Naive thymus-derived CD4-positive, alpha-beta T cell (primary cell): ENCODE measurements at regions of chr6 and their contacts with region 1.

Region 1: DNA sequence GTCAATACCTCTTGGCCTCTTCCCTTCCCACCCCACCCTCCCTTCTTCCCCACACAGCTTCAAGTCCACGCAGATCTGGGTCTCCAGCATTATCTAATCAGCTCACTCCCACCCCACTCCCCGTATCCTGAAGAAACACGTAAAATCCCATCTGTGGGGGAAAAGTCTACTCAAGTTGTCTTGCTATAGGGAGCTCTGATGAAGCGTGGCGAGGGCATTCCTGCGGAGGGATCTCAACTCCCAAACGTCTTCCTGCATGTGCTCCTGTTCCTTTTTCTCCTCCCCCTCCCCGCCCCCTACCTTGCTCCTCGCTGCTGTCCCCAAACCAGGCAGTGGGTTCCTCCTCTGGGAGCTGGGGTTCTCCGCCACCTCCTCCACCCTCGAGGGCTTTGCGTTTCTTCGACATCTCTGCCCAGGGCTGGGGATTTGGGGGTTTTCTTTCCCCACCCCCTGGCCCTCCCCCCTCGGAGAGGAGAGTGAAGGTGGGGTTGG is 181.8 kb downstream of the TBXT start:
- DNase-seq: no peak
- ATAC-seq: no peak
- H3K4me3 ChIP-seq: no peak overlapping the region
- H3K4me3 Mint-ChIP-seq: no peak overlapping the region
- H3K27ac ChIP-seq: no peak overlapping the region
- H3K27ac Mint-ChIP-seq: no peak overlapping the region
- H3K4me1 ChIP-seq: no peaks in the 10 kb centered on the region
- H3K4me1 Mint-ChIP-seq: peaks cover 6 to 19% (median 16%) of the 10 kb centered on the region in 7 donors
- H3K27me3 ChIP-seq: no peaks in the 10 kb centered on the region
- H3K27me3 Mint-ChIP-seq: peaks cover 43 to 62% (median 53%) of the 10 kb centered on the region in 5 donors

Region 2: DNA sequence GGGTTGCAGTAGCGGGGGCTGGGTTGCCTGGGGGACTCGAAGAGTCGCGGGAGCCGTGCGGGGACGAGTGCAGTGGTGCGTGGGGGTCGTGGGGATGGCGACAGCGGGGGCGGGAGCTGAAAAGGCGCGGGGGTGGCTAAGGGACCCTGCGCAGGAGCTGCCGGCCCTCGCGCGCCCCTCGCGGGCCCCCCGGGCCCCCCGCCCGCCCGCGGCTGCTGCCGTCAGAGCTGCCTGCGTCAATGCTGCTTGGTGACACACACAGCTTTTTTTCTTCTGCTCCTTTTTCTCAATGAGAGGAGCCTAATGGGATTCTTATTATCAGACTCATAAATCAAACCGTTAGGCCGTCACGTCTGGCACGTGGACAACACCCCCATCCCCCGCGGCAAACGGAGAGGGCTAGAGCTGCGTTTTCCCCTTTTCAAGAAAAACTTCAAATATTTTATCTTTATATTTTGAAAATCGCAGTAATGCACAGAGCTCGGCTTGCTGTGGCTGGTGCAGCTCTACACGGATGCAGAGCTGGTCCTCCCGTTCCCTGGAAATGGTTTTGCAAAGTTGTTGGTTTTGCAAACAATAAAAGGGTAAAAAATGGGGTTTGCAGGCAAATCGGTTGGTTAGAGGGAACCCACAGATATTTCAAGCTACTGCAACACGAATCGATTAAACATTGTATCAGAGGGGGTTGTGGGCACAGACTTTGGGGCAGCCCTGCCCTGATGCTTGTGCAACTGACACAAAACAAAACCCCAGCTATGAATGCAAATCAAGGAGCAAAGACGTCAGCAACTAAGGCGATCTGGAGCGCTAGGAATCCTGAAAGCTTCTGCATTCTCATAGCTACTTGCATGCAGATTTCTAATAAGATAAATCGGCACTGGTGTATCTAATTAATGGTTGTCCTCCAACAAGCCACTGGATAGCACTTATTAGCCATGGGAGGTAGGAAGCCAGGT is 20.4 kb after region 1 on chr6:
- CTCF ChIA-PET with region 1: no interaction called
- POLR2A ChIA-PET with region 1: no interaction called
- intact Hi-C with region 1: loop called in 1 of 2 experiments (anchors 2 kb)
- DNase-seq: no peak
- ATAC-seq: no peak
- H3K4me3 ChIP-seq: no peak overlapping the region
- H3K4me3 Mint-ChIP-seq: peak overlapping the region in 3 of 10 donors; percentile 19 to 33 (median 30)
- H3K27ac ChIP-seq: no peak overlapping the region
- H3K27ac Mint-ChIP-seq: no peak overlapping the region
- H3K4me1 ChIP-seq: no peaks in the 10 kb centered on the region
- H3K4me1 Mint-ChIP-seq: peaks cover 0 to 15% (median 4%) of the 10 kb centered on the region in 7 donors
- H3K27me3 ChIP-seq: no peaks in the 10 kb centered on the region
- H3K27me3 Mint-ChIP-seq: peaks cover 60 to 79% (median 73%) of the 10 kb centered on the region in 5 donors